PC-3 (cell line): ENCODE measurements at regions of chr2 and their contacts with region 1.

Region 1: GRCh38 chr2:233251306-233252116 is at the start of gene ATG16L1:
- DNase-seq: peak; percentile 97
- ATAC-seq: peak; percentile 70
- H3K4me3 ChIP-seq: peak within 1 kb of the TSS; percentile 97
- H3K27ac ChIP-seq: peak within 1 kb of the TSS; percentile 73
- H3K4me1 ChIP-seq: peaks cover 49% of the 10 kb centered on the region
- H3K27me3 ChIP-seq: no peaks in the 10 kb centered on the region
- CTCF ChIP-seq: peak; percentile 92
- total RNA-seq, gene ATG16L1: 126 and 173 TPM in 2 replicates

Region 2: GRCh38 chr2:232761301-232761907 is 490.1 kb before region 1 on chr2:
- CTCF ChIA-PET with region 1: no interaction called
- POLR2A ChIA-PET with region 1: no interaction called
- intact Hi-C with region 1: loop called (anchors 10 kb)
- DNase-seq: peak; percentile 66
- ATAC-seq: peak; percentile 73
- H3K4me3 ChIP-seq: no peak overlapping the region
- H3K27ac ChIP-seq: no peak overlapping the region
- H3K4me1 ChIP-seq: peaks cover under 1% of the 10 kb centered on the region; the same call in 1 of the 2 replicates
- H3K27me3 ChIP-seq: no peaks in the 10 kb centered on the region
- CTCF ChIP-seq: peak; percentile 76

Region 3: GRCh38 chr2:232876078-232876977 is 375.2 kb before region 1 on chr2:
- CTCF ChIA-PET with region 1: interaction called, 3 read pairs
- POLR2A ChIA-PET with region 1: no interaction called
- intact Hi-C with region 1: loop called (anchors 1 kb)
- DNase-seq: peak; percentile 80
- ATAC-seq: peak; percentile 68
- H3K4me3 ChIP-seq: peak overlapping the region; percentile 85
- H3K27ac ChIP-seq: peak overlapping the region; percentile 12
- H3K4me1 ChIP-seq: peaks cover 17% of the 10 kb centered on the region
- H3K27me3 ChIP-seq: no peaks in the 10 kb centered on the region
- CTCF ChIP-seq: 0 out of 2 replicates have a peak, but pooled peaks have one; percentile 10

Region 4: DNA sequence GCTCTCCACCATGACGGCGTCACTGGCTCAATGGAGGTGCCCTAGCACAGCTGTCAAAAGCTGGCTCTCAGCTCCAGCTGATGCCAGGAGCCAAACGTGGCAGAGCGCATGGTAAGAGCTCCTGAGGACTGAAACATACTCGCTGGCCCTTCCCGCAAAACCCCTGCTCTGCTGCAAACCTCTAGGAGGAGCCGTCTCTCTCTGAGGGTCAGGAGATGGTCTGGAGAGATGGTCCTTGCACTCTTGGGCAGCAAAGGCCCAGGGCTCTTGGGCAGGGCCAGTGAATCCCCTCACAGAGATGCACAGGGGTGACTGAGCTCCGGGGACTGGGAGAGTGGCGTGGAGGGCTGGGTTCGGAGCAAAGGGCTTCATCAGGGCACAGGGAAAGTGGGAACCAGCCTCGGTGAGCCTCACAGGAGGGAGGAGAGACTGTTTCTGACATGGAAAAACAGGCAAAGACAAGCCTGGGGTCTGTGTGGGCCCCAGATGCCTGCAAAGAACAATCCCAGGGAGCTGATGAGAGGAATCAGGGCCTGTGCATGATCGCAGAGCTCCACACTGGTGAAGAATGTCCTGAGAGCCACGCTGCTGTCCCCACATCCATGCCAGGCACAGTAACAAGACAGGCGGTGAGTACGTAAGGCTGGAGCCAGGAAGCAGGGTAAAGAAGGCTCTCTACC is 364.2 kb before region 1 on chr2:
- CTCF ChIA-PET with region 1: no interaction called
- POLR2A ChIA-PET with region 1: no interaction called
- intact Hi-C with region 1: no loop called
- DNase-seq: no peak
- ATAC-seq: peak; percentile 30; the same call in 1 of the 2 replicates
- H3K4me3 ChIP-seq: no peak overlapping the region
- H3K27ac ChIP-seq: no peak overlapping the region
- H3K4me1 ChIP-seq: peaks cover 10% of the 10 kb centered on the region; the same call in 1 of the 2 replicates
- H3K27me3 ChIP-seq: no peaks in the 10 kb centered on the region
- CTCF ChIP-seq: peak; percentile 38; the same call in 1 of the 2 replicates

Region 5: GRCh38 chr2:232979871-232980461 is 271.5 kb before region 1 on chr2:
- CTCF ChIA-PET with region 1: interaction called, 15 read pairs
- POLR2A ChIA-PET with region 1: no interaction called
- intact Hi-C with region 1: loop called (anchors 2 kb)
- DNase-seq: peak; percentile 95
- ATAC-seq: peak; percentile 91
- H3K4me3 ChIP-seq: no peak overlapping the region
- H3K27ac ChIP-seq: peak overlapping the region; percentile 90
- H3K4me1 ChIP-seq: peaks cover 36% of the 10 kb centered on the region
- H3K27me3 ChIP-seq: no peaks in the 10 kb centered on the region
- CTCF ChIP-seq: peak; percentile 67

Region 6: DNA sequence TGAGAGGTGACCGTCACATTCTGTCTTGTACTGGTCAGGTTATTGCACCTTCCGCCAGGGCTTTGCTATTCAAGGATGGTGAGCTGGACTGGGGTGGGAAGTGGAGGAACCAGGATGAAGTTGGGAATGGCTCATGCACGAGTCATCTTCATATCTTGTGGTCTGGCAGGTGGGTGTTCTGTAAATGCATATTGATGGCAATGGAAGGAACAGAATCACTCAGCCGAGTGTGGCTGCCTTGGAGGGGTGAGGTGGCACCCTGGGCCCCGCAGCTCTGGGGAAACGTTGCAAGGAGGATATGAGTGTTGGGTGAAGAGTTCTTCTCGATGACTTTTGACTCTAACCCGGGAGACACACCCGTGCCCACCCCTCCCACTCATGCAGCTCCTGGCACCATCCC is 217.8 kb before region 1 on chr2:
- CTCF ChIA-PET with region 1: interaction called, 4 read pairs
- POLR2A ChIA-PET with region 1: interaction called, 9 read pairs
- intact Hi-C with region 1: loop called (anchors 1 kb)
- DNase-seq: peak; percentile 96
- ATAC-seq: peak; percentile 56
- H3K4me3 ChIP-seq: no peak overlapping the region
- H3K27ac ChIP-seq: peak overlapping the region; percentile 98
- H3K4me1 ChIP-seq: peaks cover 78% of the 10 kb centered on the region
- H3K27me3 ChIP-seq: no peaks in the 10 kb centered on the region
- CTCF ChIP-seq: no peak

Region 7: DNA sequence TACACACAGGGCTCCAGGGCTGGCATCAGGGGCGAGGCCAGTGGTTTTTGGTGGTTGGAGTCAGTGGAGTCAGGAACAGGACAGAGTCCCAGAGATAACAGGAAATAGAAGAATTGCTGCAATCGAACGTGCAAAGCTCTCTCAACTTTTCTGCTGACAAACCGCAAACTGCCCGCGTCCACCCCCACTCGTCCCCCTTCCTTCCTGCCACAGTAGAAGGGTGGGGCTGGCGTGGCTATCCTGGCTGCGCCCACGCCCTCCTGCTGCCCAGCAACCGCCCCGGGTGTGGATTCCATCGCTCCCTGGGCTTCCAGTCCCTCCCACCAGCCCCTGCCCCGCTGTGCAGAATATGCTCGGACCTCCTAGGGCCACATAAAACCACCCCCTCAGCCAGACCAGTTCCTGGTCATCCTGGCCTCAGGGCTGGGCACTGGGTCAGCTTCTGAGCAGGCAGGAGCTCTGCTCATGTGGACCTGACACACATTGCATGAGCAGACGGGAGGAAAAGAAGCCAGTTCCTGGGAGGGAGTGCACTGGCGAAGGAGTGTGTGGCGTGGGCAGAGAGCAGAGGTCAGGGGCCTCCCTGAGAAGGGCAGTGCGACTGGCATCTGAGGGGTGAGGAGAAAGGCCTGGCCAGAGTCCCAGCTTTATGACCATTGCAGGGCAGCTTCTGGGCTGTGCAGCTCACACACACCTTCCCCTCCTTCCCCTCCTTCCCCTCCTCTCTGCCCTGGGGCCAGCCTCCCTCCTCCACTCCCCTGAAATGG is 85.4 kb before region 1 on chr2:
- CTCF ChIA-PET with region 1: no interaction called
- POLR2A ChIA-PET with region 1: no interaction called
- intact Hi-C with region 1: loop called (anchors 5 kb)
- DNase-seq: peak; percentile 84
- ATAC-seq: peak; percentile 91
- H3K4me3 ChIP-seq: peak overlapping the region; percentile 28; the same call in 1 of the 2 replicates
- H3K27ac ChIP-seq: peak overlapping the region; percentile 93
- H3K4me1 ChIP-seq: peaks cover 21% of the 10 kb centered on the region
- H3K27me3 ChIP-seq: no peaks in the 10 kb centered on the region
- CTCF ChIP-seq: no peak

Region 8: GRCh38 chr2:233409286-233409991 is 157.9 kb after region 1 on chr2:
- CTCF ChIA-PET with region 1: no interaction called
- POLR2A ChIA-PET with region 1: no interaction called
- intact Hi-C with region 1: no loop called
- DNase-seq: no peak
- ATAC-seq: no peak
- H3K4me3 ChIP-seq: no peak overlapping the region
- H3K27ac ChIP-seq: no peak overlapping the region
- H3K4me1 ChIP-seq: peaks cover 20% of the 10 kb centered on the region
- H3K27me3 ChIP-seq: no peaks in the 10 kb centered on the region
- CTCF ChIP-seq: no peak

Region 9: GRCh38 chr2:233443468-233444183 is 192.1 kb after region 1 on chr2:
- CTCF ChIA-PET with region 1: no interaction called
- POLR2A ChIA-PET with region 1: no interaction called
- intact Hi-C with region 1: loop called (anchors 10 kb)
- DNase-seq: peak; percentile 84
- ATAC-seq: peak; percentile 82
- H3K4me3 ChIP-seq: no peak overlapping the region
- H3K27ac ChIP-seq: no peak overlapping the region
- H3K4me1 ChIP-seq: no peaks in the 10 kb centered on the region
- H3K27me3 ChIP-seq: no peaks in the 10 kb centered on the region
- CTCF ChIP-seq: peak; percentile 90